HepG2 (cell line): ENCODE measurements at regions of chr5 and their contacts with region 1.

Region 1: DNA sequence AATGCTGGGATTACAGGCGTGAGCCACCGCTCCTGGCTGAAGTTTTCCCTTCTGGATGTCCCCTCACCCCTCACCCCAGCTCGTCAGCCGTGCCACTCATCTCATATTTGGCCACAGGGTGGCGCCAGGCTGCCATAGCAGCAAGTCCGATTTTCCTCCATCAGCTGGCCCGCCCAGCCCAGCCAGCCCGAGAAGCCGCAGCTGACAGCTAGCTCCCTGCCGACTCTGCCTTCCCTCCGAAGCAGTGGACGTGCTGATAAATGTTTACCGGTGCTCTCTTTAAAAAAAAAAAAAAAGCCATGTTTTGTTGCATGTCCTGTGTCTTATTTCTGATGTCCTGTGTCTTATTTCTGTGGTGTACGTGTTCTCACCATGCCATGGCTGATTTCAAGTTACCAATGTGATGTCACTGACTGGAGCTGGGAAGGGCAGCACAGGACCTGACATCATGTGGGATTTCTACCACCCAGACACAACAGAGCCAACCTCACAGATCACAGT is 58.3 kb downstream of the PFDN1 start:
- DNase-seq: peak; percentile 74
- ATAC-seq: peak; percentile 63
- H3K4me3 ChIP-seq: no peak overlapping the region
- H3K27ac ChIP-seq: no peak overlapping the region
- H3K4me1 ChIP-seq: peaks cover 23% of the 10 kb centered on the region
- H3K27me3 ChIP-seq: no peaks in the 10 kb centered on the region
- CTCF ChIP-seq: peak; percentile 93
- EP300 ChIP-seq: no peak
- POLR2A ChIP-seq: no peak
- RAD21 ChIP-seq: peak; percentile 97

Region 2: GRCh38 chr5:140351609-140352334 is 107.2 kb after region 1 on chr5:
- CTCF ChIA-PET with region 1: interaction called, 17 read pairs
- POLR2A ChIA-PET with region 1: interaction called, 11 read pairs
- in situ Hi-C with region 1: no loop called
- intact Hi-C with region 1: loop called (anchors 1 kb)
- DNase-seq: peak; percentile 65
- ATAC-seq: peak; percentile 56; the same call in 2 of the 3 replicates
- H3K4me3 ChIP-seq: no peak overlapping the region
- H3K27ac ChIP-seq: no peak overlapping the region
- H3K4me1 ChIP-seq: peaks cover 59% of the 10 kb centered on the region
- H3K27me3 ChIP-seq: 0 out of 5 replicates have a peak, but pooled peaks cover 0 to 7% of the 10 kb centered on the region in 2 experiments
- CTCF ChIP-seq: peak; percentile 70
- EP300 ChIP-seq: no peak
- POLR2A ChIP-seq: no peak
- RAD21 ChIP-seq: no peak

Region 3: DNA sequence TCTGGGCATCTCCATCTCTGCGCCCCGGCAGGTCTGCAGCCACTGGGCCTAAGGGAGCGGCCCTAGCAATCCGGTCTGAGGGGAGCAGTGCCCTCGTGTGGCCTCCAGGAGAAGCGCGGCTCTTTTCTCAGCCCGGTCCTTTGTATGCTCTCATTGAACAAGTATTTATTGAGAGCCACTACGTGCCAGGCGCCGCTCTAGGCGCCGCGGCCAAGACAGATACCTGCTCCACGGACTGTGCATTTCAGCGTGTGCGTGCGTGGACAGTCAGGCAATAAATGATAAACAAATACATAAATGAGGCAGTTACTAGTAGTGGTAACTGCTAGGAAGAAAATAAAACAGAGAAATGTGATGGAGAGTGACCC is 113.1 kb after region 1 on chr5:
- CTCF ChIA-PET with region 1: interaction called, 31 read pairs
- POLR2A ChIA-PET with region 1: interaction called, 6 read pairs
- in situ Hi-C with region 1: loop called (anchors 5 kb)
- intact Hi-C with region 1: loop called (anchors 1 kb)
- DNase-seq: peak; percentile 77
- ATAC-seq: peak; percentile 93
- H3K4me3 ChIP-seq: peak overlapping the region; percentile 43 to 58 (median 51)
- H3K27ac ChIP-seq: no peak overlapping the region
- H3K4me1 ChIP-seq: peaks cover 37% of the 10 kb centered on the region
- H3K27me3 ChIP-seq: no peaks in the 10 kb centered on the region
- CTCF ChIP-seq: peak; percentile 93
- EP300 ChIP-seq: no peak
- POLR2A ChIP-seq: no peak
- RAD21 ChIP-seq: peak; percentile 91

Region 4: DNA sequence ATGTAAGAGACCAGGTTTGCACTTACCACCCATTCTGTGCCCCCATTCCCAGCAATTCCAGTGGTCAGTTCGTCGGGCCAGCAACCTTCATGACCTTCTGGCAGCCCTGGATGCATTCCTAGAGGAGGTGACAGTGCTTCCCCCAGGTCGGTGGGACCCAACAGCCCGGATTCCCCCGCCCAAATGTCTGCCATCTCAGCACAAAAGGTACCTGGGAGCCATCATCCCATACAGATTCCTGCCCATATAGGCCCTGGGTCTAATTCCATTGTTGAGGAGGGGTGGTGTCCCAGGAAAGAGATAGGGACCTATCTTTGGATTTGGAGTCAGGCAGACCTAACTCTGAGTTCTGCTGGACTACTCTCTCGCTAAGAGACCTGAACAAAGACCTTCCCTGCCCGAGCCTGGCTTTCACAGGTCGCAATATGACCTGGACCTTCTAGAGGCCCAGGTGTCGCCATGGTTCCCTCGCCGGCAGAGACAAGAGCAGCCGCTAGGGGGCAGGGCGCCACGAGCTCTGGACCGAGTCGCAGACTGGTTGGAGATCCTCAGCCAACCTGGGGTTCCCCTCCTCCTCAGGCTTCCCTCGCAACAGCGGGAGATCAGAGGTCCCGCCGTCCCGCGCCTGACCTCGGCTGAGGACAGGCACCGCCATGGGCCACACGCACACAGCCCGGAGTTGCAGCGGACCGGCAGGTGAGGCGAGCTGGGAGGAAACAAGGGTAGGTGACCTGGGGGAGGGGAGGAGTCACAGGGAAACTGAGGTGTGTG is 118.5 kb after region 1 on chr5:
- CTCF ChIA-PET with region 1: interaction called, 31 read pairs
- POLR2A ChIA-PET with region 1: interaction called, 6 read pairs
- in situ Hi-C with region 1: loop called (anchors 5 kb)
- intact Hi-C with region 1: no loop called
- DNase-seq: peak; percentile 74
- ATAC-seq: peak; percentile 87
- H3K4me3 ChIP-seq: peak overlapping the region; percentile 36 to 75 (median 59); a peak in 5 of 6 replicates
- H3K27ac ChIP-seq: no peak overlapping the region
- H3K4me1 ChIP-seq: peaks cover 31% of the 10 kb centered on the region
- H3K27me3 ChIP-seq: peaks cover 0 to 8% of the 10 kb centered on the region in 2 experiments; a peak in 1 of 5 replicates
- CTCF ChIP-seq: peak; percentile 98
- EP300 ChIP-seq: no peak
- POLR2A ChIP-seq: no peak
- RAD21 ChIP-seq: peak; percentile 66